Activated CD4-positive, alpha-beta memory T cell treated with anti-CD3 and anti-CD28 coated beads for 36 hours (primary cell): ENCODE measurements at regions of chr12 and their contacts with region 1.

Region 1: GRCh38 chr12:57238854-57239554 is 9.5 kb downstream of the SHMT2 start:
- DNase-seq: peak; percentile 93
- H3K4me3 Mint-ChIP-seq: peak overlapping the region; percentile 82
- H3K27ac Mint-ChIP-seq: no peak overlapping the region
- H3K4me1 Mint-ChIP-seq: peaks cover 60% of the 10 kb centered on the region
- H3K27me3 Mint-ChIP-seq: peaks cover 39% of the 10 kb centered on the region

Region 2: GRCh38 chr12:57124259-57124877 is 114.6 kb before region 1 on chr12:
- CTCF ChIA-PET with region 1: interaction called, 37 read pairs
- POLR2A ChIA-PET with region 1: no interaction called
- intact Hi-C with region 1: no loop called
- DNase-seq: peak; percentile 83
- H3K4me3 Mint-ChIP-seq: no peak overlapping the region
- H3K27ac Mint-ChIP-seq: no peak overlapping the region
- H3K4me1 Mint-ChIP-seq: peaks cover 11% of the 10 kb centered on the region
- H3K27me3 Mint-ChIP-seq: peaks cover 6% of the 10 kb centered on the region

Region 3: DNA sequence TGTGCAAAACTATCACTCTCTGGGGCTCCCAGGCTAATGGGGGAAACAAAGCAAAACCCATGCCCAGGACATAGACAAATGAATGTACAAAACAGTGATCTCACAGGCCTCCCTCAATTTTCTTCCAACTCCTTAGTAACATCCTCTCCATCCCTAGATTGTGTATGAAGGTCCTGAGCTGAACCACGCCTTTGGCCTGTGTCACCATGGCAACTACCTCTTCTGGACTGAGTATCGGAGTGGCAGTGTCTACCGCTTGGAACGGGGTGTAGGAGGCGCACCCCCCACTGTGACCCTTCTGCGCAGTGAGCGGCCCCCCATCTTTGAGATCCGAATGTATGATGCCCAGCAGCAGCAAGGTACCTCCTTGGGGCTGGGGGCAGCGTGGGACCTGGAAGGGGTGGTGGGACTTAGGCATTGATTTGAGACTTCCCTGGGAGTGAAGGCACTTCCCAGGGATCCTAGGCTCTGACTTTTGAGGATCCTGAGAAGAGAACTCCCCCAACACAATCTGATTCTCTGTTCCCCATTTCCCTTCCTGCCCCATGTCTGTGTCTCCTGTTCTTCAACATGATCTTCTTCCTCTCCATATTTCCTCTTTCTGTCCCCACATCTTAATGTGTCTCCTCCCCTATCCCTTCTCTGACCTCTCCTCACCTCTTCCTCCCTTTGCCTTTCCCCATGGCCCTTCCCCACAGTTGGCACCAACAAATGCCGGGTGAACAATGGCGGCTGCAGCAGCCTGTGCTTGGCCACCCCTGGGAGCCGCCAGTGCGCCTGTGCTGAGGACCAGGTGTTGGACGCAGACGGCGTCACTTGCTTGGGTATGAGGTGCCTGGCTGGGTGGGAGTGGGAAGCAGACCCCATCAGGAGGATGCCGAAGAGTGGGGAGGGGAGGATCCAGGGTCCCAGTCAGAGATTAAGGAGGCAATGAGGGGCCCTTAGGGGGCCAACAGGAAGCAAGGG is 76.6 kb before region 1 on chr12:
- CTCF ChIA-PET with region 1: no interaction called
- POLR2A ChIA-PET with region 1: no interaction called
- intact Hi-C with region 1: no loop called
- DNase-seq: no peak
- H3K4me3 Mint-ChIP-seq: no peak overlapping the region
- H3K27ac Mint-ChIP-seq: no peak overlapping the region
- H3K4me1 Mint-ChIP-seq: peaks cover 18% of the 10 kb centered on the region
- H3K27me3 Mint-ChIP-seq: no peaks in the 10 kb centered on the region

Region 4: DNA sequence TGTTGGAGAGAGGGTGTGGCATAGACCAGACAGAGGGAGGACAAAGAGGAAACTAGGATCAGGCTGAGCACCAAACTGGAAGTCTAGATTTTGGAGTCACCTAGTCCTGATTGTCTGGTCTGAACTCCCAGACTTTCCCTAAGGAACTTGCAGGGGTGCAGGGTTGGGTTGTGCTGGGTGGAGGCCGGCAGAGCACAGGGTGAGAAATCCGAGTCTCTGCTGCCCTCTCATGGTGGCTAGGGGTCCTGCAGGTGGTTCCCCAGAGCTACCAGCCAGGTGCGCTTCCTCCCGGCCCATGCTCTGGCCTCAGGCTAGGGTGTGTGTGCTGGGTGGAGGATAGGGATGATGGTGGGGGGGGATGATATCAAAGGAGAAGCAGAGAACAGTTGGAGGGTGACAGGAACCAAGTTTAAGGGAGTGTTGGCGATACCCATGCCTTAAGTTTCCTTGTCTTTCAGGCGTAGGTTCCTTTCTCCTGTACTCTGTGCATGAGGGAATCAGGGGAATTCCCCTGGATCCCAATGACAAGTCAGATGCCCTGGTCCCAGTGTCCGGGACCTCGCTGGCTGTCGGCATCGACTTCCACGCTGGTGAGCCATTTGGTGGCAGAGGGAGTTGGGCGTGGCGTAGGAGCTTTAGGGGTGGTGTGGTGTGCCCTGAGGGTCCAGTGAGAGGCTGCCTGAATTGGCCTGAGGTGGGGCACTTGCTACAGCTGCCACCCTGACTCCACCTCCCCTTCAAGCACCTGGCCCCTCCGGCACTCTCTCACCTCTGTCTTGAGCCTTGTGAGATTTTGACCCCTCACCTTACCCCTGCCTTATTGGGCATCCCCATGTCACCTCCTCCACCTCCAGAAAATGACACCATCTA is 55.8 kb before region 1 on chr12:
- CTCF ChIA-PET with region 1: interaction called, 13 read pairs
- POLR2A ChIA-PET with region 1: no interaction called
- intact Hi-C with region 1: no loop called
- DNase-seq: peak; percentile 87
- H3K4me3 Mint-ChIP-seq: no peak overlapping the region
- H3K27ac Mint-ChIP-seq: no peak overlapping the region
- H3K4me1 Mint-ChIP-seq: no peaks in the 10 kb centered on the region
- H3K27me3 Mint-ChIP-seq: no peaks in the 10 kb centered on the region

Region 5: DNA sequence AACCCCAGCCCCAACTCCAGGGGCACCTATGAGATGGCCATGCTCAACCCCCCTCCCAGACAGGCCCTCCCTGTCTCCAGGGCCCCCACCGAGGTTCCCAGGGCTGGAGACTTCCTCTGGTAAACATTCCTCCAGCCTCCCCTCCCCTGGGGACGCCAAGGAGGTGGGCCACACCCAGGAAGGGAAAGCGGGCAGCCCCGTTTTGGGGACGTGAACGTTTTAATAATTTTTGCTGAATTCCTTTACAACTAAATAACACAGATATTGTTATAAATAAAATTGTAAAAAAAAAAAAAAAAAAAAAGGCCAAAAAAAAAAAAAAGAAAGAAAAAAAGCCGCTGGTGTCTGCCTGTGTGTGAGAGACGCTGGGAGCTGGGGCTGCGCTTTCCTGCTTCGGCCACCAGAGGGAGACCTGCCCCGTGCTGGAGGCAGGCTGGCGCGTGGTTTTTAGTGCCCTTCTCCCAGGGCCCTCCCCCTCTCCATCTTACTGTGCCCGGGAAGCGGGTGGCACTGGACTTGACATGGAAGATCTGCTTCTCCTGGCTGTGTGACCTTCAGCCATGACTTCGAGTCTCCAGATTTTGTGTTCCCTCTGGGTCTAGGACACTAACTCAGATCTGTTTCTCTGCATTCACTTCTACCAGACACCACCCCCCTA is 25.8 kb before region 1 on chr12:
- CTCF ChIA-PET with region 1: interaction called, 447 read pairs
- POLR2A ChIA-PET with region 1: interaction called, 16 read pairs
- intact Hi-C with region 1: loop called (anchors 1 kb)
- DNase-seq: peak; percentile 90
- H3K4me3 Mint-ChIP-seq: no peak overlapping the region
- H3K27ac Mint-ChIP-seq: no peak overlapping the region
- H3K4me1 Mint-ChIP-seq: peaks cover 31% of the 10 kb centered on the region
- H3K27me3 Mint-ChIP-seq: peaks cover 40% of the 10 kb centered on the region

Region 6: DNA sequence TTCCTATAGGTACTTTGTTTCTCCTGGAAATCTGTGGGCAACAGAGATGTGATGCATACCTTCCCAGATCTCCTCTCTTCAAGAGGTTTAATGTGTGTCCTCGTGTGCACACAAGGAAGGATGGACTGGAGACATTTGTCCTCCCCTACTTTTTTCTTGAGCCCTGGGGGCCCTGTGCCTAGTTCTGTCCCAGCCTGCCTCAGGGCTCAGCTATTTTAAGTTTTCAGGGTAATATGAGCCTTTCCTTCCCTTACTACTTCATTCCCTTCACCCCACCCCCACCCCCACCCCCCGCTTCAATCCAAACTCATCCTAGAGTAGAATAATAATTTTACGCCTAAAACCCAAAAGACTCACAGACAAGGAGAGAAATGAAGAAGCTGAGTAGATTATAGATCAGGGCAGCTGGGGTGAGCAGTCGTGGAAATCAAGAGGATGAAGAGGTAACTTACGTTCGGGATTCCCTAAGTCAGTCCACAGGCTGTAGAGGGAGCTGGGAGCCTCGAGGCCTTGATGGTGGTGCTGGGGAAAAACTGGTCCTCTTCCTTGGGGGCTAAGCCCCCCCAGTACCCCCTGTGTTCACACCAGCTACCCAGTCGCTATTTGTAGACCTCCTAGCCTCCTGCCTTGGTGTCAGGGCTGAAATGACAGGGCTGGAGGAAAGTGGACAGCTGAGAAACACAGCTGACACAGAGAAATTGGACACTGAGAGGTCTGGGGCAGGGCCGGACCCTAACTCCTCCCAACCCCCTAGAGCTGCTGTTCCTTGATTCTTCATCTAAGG is 11.7 kb after region 1 on chr12 and contains the start of gene STAC3:
- CTCF ChIA-PET with region 1: interaction called, 10 read pairs
- POLR2A ChIA-PET with region 1: no interaction called
- intact Hi-C with region 1: no loop called
- DNase-seq: no peak
- H3K4me3 Mint-ChIP-seq: no peak within 1 kb of the TSS
- H3K27ac Mint-ChIP-seq: no peak within 1 kb of the TSS
- H3K4me1 Mint-ChIP-seq: no peaks in the 10 kb centered on the region
- H3K27me3 Mint-ChIP-seq: no peaks in the 10 kb centered on the region
- total RNA-seq, gene STAC3: 1.9 to 2.0 TPM

Region 7: DNA sequence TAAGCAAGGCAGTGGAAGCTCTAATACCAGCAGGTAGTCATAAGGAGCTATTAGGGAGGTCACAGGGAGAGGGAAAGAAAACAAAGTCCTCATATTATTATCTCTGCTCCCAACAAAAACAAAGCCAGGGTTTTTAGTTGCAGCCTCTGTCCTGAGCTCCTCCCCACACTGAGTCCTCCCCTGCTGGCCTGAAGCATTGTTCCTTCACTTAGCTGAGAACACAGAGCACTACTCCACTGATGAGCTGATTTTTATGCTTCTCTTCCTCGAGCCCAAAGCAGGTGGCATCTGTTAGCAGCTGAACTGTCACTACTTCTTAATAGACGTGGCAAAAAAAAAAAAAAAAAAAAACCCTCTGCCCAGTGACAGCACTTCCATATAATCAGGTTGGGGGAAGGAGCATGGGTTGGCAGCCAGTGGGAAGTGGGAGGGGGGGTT is 22.4 kb after region 1 on chr12:
- CTCF ChIA-PET with region 1: interaction called, 10 read pairs
- POLR2A ChIA-PET with region 1: interaction called, 5 read pairs
- intact Hi-C with region 1: no loop called
- DNase-seq: no peak
- H3K4me3 Mint-ChIP-seq: no peak overlapping the region
- H3K27ac Mint-ChIP-seq: no peak overlapping the region
- H3K4me1 Mint-ChIP-seq: peaks cover 4% of the 10 kb centered on the region
- H3K27me3 Mint-ChIP-seq: no peaks in the 10 kb centered on the region

Region 8: DNA sequence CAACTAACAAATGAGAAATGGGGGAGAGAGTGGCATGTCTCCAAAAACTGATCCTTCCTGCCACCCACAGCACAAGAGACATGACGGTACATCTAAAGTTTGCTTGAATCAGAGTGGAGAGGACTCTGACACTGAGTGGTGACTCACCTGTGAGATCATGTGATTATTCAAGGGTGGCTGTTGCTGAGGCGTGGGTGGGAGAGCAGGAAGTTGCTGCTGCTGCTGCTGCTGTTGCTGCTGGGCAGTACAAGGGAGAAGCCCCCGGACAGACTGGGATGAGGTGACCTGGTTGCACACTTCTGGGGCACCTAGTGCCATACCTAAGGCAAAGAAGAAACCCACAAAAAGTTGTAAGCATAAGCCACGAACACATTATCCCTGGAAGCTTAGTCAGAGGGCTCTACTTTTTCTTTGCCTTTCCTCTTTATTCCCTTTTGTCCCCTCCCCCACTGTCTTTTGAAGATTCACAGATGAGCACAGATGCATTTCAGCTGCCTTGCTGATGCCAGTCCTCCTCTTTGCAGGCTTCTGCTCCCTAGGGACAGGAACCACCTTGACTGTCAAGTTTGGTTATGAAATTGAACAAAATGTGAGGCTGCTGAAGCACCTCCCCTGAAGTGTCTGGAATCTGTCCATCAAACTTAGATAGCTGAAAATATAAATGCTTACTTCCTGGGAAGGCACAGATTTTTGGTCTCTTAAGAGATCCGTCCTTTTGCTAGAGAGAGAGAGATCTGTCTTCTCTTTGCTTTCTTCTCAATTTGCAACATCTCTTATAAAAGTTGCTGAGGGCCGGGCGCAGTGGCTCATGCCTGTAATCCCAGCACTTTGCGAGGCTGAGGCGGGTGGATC is 41.4 kb after region 1 on chr12:
- CTCF ChIA-PET with region 1: interaction called, 12 read pairs
- POLR2A ChIA-PET with region 1: no interaction called
- intact Hi-C with region 1: no loop called
- DNase-seq: peak; percentile 89
- H3K4me3 Mint-ChIP-seq: peak overlapping the region; percentile 71
- H3K27ac Mint-ChIP-seq: peak overlapping the region; percentile 96
- H3K4me1 Mint-ChIP-seq: peaks cover 16% of the 10 kb centered on the region
- H3K27me3 Mint-ChIP-seq: no peaks in the 10 kb centered on the region